ENCODE measurements at regions of chr1 and their contacts with region 1.

Region 1: GRCh38 chr1:15603050-15603965 is 13.9 kb upstream of the DDI2 start:
- DNase-seq: peak; percentile 84 to 97 (median 92)
- ATAC-seq: peak; percentile 98 to 99
- H3K4me3 Mint-ChIP-seq: peak overlapping the region; percentile 78 to 92 (median 84)
- H3K27ac Mint-ChIP-seq: peak overlapping the region; percentile 75 to 94 (median 90)
- H3K4me1 Mint-ChIP-seq: peaks cover 4 to 14% (median 11%) of the 10 kb centered on the region in 4 donors
- H3K27me3 Mint-ChIP-seq: no peaks in the 10 kb centered on the region

Region 2: DNA sequence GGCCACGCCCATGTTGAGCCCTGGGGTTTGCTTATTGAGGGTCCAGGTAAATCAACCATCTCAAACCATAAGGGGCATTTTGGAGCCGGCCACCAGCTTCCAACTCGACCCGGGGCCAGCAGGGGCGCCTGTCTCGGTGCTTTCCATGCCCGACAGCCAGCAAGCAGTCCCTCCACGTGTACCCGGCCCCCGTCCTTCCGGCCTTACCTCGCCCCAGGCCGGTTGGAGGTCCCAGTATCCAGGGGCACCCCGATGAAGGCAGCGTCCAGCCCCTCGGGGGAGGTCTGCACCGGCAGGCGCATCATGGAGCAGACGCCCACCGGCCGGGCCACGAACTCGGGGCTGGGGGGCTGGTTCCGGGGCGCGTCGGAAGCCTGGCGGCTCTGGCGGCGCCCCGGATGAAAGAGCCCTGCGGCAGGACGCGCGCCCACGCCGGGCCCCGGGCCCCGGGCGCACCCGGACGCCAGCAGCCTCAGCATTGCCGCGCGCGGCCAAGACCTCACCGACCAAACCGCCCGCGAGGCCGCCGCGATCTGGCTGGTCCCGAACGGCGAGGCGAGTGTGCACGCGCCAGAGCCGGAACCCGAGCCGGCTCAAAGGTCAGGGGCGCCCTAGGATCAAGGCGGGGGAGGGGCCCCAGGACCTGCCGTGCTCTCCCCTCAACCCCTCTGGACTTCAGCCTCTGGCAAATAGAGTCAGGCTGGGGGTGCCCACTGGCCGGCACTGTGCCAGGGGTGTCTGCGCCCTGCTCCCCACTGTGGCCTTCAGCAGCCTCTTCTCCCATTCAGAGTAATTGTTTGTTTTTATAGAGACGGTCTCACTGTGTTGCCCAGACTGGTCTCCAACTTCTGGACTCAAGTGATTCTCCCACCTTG is 18.6 kb before region 1 on chr1 and contains the start of gene AGMAT:
- POLR2A ChIA-PET with region 1: interaction called, 25 read pairs
- DNase-seq: peak in 9 of 10 donors; percentile 30 to 73 (median 42)
- ATAC-seq: peak; percentile 86 to 87
- H3K4me3 Mint-ChIP-seq: peak within 1 kb of the TSS; percentile 78 to 90 (median 84)
- H3K27ac Mint-ChIP-seq: peak within 1 kb of the TSS; percentile 85 to 97 (median 93)
- H3K4me1 Mint-ChIP-seq: peaks cover 8 to 50% (median 38%) of the 10 kb centered on the region in 4 donors
- H3K27me3 Mint-ChIP-seq: no peaks in the 10 kb centered on the region
- polyA plus RNA-seq, gene AGMAT: 9.0 to 15.5 (median 14.4) TPM

Region 3: DNA sequence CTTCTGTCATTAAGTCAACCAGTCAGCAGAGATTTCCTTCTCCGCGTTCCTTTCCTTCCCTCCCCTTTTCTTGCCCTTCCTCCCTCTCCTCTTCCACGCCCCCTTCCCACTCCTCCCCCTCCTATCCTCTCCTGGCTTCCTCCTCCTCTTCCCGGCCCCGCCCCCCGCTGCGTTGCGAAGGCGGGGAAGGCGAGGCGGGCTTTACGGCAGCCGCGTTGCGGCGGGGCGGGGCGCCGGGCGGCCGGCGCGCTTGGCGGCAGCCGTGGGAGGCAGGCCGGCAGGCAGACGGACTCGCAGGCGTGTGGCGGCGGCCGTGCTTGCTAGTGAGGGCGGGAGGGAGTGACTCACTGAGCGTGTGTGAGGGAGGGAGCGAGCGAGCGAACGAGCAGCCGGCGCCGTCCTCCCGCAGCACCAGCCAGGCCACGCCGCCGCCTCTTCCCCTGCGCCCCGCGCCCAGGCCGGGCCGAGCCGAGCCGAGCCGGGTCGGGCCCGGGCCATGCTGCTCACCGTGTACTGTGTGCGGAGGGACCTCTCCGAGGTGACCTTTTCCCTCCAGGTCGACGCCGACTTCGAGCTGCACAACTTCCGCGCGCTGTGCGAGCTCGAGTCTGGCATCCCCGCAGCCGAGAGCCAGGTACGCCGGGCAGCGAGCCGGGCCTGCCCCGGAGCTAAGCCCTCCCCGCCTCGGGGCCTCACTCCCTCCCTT is 14.0 kb after region 1 on chr1 and contains the start of gene DDI2:
- POLR2A ChIA-PET with region 1: interaction called, 23 read pairs
- DNase-seq: peak; percentile 85 to 96 (median 90)
- ATAC-seq: peak; percentile 91 to 94
- H3K4me3 Mint-ChIP-seq: peak within 1 kb of the TSS; percentile 85 to 96 (median 92)
- H3K27ac Mint-ChIP-seq: peak within 1 kb of the TSS; percentile 84 to 97 (median 95)
- H3K4me1 Mint-ChIP-seq: peaks cover 21 to 52% (median 45%) of the 10 kb centered on the region in 4 donors
- H3K27me3 Mint-ChIP-seq: no peaks in the 10 kb centered on the region
- polyA plus RNA-seq, gene DDI2: 4.5 to 6.1 (median 5.0) TPM

Measured in naive thymus-derived CD8-positive, alpha-beta T cell (primary cell).